ENCODE measurements at regions of chr16 and their contacts with region 1.

Region 1: DNA sequence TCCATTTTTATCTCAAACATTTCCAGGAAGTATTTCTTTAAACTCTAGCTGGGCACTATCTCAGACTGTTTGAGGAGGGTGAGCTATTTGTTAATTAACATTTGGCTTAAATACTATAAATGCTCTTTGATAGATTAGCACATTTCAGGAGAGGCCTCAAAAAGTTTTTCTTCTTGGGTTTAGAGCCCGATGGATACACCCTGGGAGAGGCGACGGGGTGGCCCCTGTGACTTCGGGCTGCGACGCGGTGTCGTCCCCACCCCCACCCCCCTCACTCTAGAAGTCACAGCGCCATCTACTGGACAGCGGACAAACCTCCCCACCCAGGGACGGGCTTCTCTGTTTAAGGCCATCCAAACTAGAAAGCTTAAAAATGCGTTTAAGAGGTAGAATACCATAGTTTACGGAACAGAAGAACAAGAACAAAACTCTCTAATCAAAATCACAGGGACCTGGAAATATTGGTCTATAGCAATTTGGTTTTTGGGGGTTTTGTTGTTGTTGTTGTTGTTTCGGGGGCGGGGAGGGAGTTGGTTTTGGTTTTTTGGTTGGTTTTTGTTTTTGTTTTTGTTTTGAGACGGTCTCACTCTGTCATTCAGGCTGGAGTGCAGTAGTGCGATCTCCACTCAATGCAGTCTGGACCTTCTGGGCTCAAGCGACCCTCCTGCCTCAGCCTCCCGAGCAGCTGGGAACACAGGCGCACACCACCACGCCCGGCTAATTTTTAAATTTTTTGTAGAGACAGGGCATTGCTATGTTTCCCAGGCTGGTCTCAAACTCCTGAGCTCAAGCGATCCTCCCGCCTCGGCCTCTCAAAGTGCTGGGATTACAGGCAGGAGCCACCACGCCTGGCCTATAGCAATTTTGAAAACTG is 254.4 kb downstream of the C16orf95 start:
- DNase-seq: peak; percentile 78
- H3K4me3 Mint-ChIP-seq: no peak overlapping the region
- H3K27ac Mint-ChIP-seq: no peak overlapping the region
- H3K4me1 Mint-ChIP-seq: no peaks in the 10 kb centered on the region
- H3K27me3 Mint-ChIP-seq: peaks cover 81% of the 10 kb centered on the region
- CTCF ChIP-seq: peak; percentile 85

Region 2: GRCh38 chr16:86819533-86819892 is 243.3 kb before region 1 on chr16:
- CTCF ChIA-PET with region 1: no interaction called
- intact Hi-C with region 1: loop called (anchors 10 kb)
- DNase-seq: no peak
- H3K4me3 Mint-ChIP-seq: peak overlapping the region; percentile 47
- H3K27ac Mint-ChIP-seq: no peak overlapping the region
- H3K4me1 Mint-ChIP-seq: peaks cover 41% of the 10 kb centered on the region
- H3K27me3 Mint-ChIP-seq: peaks cover 8% of the 10 kb centered on the region
- CTCF ChIP-seq: no peak

Region 3: DNA sequence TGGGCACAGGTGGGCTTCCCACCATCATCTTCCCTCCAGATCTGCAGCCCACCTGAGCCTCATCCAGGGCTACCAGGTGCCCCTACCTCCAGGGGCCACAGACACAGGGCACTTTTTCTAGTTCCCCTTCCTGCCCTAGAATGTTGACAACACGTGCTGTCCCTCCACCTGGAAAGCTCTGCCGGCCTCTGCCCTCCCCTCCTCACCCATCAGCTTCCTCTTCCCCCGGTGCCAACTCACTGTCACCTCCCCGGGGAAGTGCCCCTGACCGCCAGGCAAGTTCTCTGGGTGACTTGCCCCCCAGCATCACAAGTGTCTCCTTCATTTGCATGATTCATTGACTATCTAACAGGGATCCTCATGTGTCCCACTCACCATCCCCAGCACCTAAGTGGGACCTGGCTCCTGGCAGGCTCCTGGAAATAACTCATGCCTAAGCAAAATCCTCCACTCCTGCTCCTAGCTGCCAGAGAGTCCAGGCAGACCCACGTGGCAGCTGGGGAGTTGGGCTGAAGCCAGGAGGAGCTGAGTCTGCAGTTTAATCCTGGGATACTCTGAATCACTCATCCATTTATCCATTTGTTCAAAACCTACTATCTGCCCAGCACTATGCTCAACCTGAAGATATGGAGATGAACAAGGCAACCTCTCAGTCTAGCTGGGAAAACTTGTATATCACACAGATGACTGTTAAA is 180.1 kb before region 1 on chr16:
- CTCF ChIA-PET with region 1: no interaction called
- intact Hi-C with region 1: loop called (anchors 10 kb)
- DNase-seq: no peak
- H3K4me3 Mint-ChIP-seq: no peak overlapping the region
- H3K27ac Mint-ChIP-seq: no peak overlapping the region
- H3K4me1 Mint-ChIP-seq: peaks cover 6% of the 10 kb centered on the region
- H3K27me3 Mint-ChIP-seq: peaks cover 97% of the 10 kb centered on the region
- CTCF ChIP-seq: no peak

Region 4: GRCh38 chr16:86984991-86985647 is 77.7 kb before region 1 on chr16:
- CTCF ChIA-PET with region 1: no interaction called
- intact Hi-C with region 1: no loop called
- DNase-seq: no peak
- H3K4me3 Mint-ChIP-seq: no peak overlapping the region
- H3K27ac Mint-ChIP-seq: no peak overlapping the region
- H3K4me1 Mint-ChIP-seq: peaks cover 3% of the 10 kb centered on the region
- H3K27me3 Mint-ChIP-seq: peaks cover 60% of the 10 kb centered on the region
- CTCF ChIP-seq: no peak

Region 5: DNA sequence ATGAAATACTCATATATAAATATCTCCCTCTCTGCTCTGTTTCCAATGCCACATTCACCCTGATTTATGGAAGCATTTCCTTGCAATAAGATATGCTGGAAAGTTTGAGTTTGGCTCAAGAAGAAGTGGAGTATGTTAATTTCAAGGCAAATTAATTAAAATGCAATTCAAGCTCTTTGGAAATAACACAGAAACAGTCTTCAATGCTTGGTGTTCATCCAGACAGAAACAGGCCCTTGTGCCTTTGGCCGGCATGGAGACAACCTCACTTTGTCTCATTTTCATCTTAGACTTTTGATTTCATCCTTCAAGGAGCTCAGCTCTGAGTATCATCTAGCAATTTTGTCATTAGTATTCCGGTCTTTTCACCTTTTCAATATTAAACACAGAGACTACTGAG is 44.4 kb after region 1 on chr16:
- CTCF ChIA-PET with region 1: no interaction called
- intact Hi-C with region 1: no loop called
- DNase-seq: no peak
- H3K4me3 Mint-ChIP-seq: no peak overlapping the region
- H3K27ac Mint-ChIP-seq: no peak overlapping the region
- H3K4me1 Mint-ChIP-seq: no peaks in the 10 kb centered on the region
- H3K27me3 Mint-ChIP-seq: peaks cover 100% of the 10 kb centered on the region
- CTCF ChIP-seq: no peak

Measured in Calu3 (cell line).